Esophagus muscularis mucosa (tissue), 4 donors: ENCODE measurements at regions of chr2 and their contacts with region 1.

Region 1: DNA sequence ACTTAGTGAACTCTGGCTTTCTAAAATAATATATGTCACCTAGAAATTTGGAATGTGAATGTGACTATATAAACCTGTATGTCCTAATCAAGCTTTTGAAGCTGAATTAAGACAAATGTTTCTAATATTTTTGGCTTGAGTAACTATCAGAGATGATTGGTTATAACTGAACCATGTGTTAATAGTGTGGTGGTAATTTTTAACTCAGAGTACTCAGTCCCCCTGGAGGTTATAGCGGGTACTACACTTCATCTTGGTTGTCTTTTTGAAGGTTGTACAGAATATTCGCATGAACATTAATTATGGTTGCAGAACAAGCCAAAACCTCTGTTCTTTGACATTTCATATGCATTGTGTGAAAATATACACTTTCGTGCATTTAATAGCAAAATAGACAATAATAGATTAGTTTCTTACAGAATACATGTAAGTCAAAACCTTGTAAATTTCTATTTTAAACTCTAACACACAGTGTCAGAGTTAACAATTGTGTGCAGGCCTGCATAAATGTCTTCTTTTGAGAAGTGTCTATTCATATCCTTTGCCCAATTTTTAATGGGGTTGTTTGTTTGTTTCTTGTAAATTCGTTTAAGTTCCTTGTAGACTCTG is 86.0 kb downstream of the OSBPL6 start:
- DNase-seq: no peak
- H3K4me3 ChIP-seq: no peak overlapping the region
- H3K27ac ChIP-seq: no peak overlapping the region
- H3K4me1 ChIP-seq: peaks cover 0 to 7% (median 3%) of the 10 kb centered on the region in 4 donors
- H3K27me3 ChIP-seq: no peaks in the 10 kb centered on the region
- CTCF ChIP-seq: peak; percentile 75 to 90 (median 84)
- EP300 ChIP-seq: no peak
- POLR2A ChIP-seq: no peak

Region 2: GRCh38 chr2:178112202-178113152 is 167.9 kb before region 1 on chr2 and contains the start of gene RBM45:
- intact Hi-C with region 1: loop called (anchors 5 kb)
- DNase-seq: peak; percentile 97
- H3K4me3 ChIP-seq: peak within 1 kb of the TSS; percentile 83 to 87 (median 86)
- H3K27ac ChIP-seq: peak within 1 kb of the TSS; percentile 79 to 86 (median 82)
- H3K4me1 ChIP-seq: peaks cover 7 to 21% (median 20%) of the 10 kb centered on the region in 4 donors
- H3K27me3 ChIP-seq: peaks cover 0 to 6% (median 0%) of the 10 kb centered on the region in 4 donors
- CTCF ChIP-seq: peak; percentile 91 to 98 (median 96)
- EP300 ChIP-seq: no peak
- POLR2A ChIP-seq: no peak
- total RNA-seq, gene RBM45: 5.6 to 13.7 (median 7.4) TPM

Region 3: GRCh38 chr2:178128836-178129630 is 151.3 kb before region 1 on chr2:
- intact Hi-C with region 1: loop called (anchors 2 kb)
- DNase-seq: no peak
- H3K4me3 ChIP-seq: no peak overlapping the region
- H3K27ac ChIP-seq: no peak overlapping the region
- H3K4me1 ChIP-seq: no peaks in the 10 kb centered on the region
- H3K27me3 ChIP-seq: no peaks in the 10 kb centered on the region
- CTCF ChIP-seq: no peak
- EP300 ChIP-seq: no peak
- POLR2A ChIP-seq: no peak

Region 4: GRCh38 chr2:178194600-178195389 is 85.6 kb before region 1 on chr2:
- intact Hi-C with region 1: loop called (anchors 5 kb)
- DNase-seq: no peak
- H3K4me3 ChIP-seq: peak overlapping the region; percentile 71 to 93 (median 82)
- H3K27ac ChIP-seq: peak overlapping the region; percentile 85 to 95 (median 92)
- H3K4me1 ChIP-seq: peaks cover 16 to 21% (median 18%) of the 10 kb centered on the region in 4 donors
- H3K27me3 ChIP-seq: peaks cover 0 to 7% (median 0%) of the 10 kb centered on the region in 4 donors
- CTCF ChIP-seq: no peak
- EP300 ChIP-seq: no peak
- POLR2A ChIP-seq: no peak

Region 5: GRCh38 chr2:178238144-178238521 is 42.2 kb before region 1 on chr2:
- intact Hi-C with region 1: no loop called
- DNase-seq: no peak
- H3K4me3 ChIP-seq: no peak overlapping the region
- H3K27ac ChIP-seq: no peak overlapping the region
- H3K4me1 ChIP-seq: peaks cover 0 to 12% (median 12%) of the 10 kb centered on the region in 4 donors
- H3K27me3 ChIP-seq: no peaks in the 10 kb centered on the region
- CTCF ChIP-seq: no peak
- EP300 ChIP-seq: no peak
- POLR2A ChIP-seq: no peak